ENCODE measurements at regions of chr12 and their contacts with region 1.

Region 1: DNA sequence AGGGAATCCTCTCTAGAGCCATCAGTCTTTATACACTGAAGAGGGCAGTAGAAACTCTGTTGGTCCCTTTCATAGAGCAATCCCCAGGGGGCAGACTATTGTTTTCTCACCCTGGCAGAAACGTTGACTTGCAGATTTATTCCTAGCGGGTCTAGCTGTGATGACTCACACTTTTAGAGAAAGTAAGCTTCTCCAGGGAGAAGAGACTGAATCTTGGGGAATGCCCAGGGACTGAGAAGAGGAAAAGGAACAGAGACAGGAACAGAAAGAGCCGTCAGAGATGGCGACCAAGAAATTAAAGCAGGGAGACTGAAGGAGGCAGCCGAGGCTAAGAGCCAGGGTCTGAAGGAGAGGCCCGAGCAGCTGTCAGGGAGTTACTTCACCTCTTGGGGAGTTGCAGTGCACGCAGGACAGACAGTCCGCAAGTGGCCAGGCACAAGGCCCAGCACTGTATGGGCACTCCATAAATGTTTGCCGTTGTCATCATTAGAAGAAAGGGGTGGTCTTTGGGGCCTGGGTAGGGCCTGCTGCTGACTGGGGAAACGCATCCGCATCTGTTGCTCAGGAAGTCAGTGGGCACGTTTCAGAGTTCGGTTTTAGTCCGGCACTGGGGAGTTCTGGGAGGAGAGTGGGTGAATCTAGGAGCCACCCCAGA is 13.0 kb downstream of the PLEKHG6 start:
- DNase-seq: peak in 4 of 5 donors; percentile 28 to 67 (median 52)
- H3K4me3 ChIP-seq: peak overlapping the region; percentile 22
- H3K4me3 Mint-ChIP-seq: peak overlapping the region; percentile 63 to 88 (median 83)
- H3K27ac ChIP-seq: no peak overlapping the region
- H3K27ac Mint-ChIP-seq: peak overlapping the region; percentile 81 to 96 (median 93)
- H3K4me1 ChIP-seq: peaks cover 34% of the 10 kb centered on the region
- H3K4me1 Mint-ChIP-seq: peaks cover 50 to 58% (median 55%) of the 10 kb centered on the region in 3 donors
- H3K27me3 ChIP-seq: no peaks in the 10 kb centered on the region
- H3K27me3 Mint-ChIP-seq: no peaks in the 10 kb centered on the region

Region 2: GRCh38 chr12:6341417-6342139 is 18.1 kb after region 1 on chr12 and contains the start of gene TNFRSF1A:
- CTCF ChIA-PET with region 1: interaction called, 32 read pairs
- POLR2A ChIA-PET with region 1: interaction called, 22 read pairs
- DNase-seq: peak in 3 of 5 donors; percentile 48 to 63 (median 58)
- H3K4me3 ChIP-seq: peak within 1 kb of the TSS; percentile 91
- H3K4me3 Mint-ChIP-seq: no peak within 1 kb of the TSS
- H3K27ac ChIP-seq: peak within 1 kb of the TSS; percentile 89
- H3K27ac Mint-ChIP-seq: peak within 1 kb of the TSS in 2 of 8 donors; percentile 94 to 97
- H3K4me1 ChIP-seq: peaks cover 71% of the 10 kb centered on the region
- H3K4me1 Mint-ChIP-seq: peaks cover 36 to 42% (median 37%) of the 10 kb centered on the region in 3 donors
- H3K27me3 ChIP-seq: no peaks in the 10 kb centered on the region
- H3K27me3 Mint-ChIP-seq: peaks cover 0 to 3% of the 10 kb centered on the region in 2 donors
- total RNA-seq, gene TNFRSF1A: 62.1 to 62.9 TPM

Measured in CD8-positive, alpha-beta memory T cell (primary cell).